ENCODE measurements at regions of chr18 and their contacts with region 1.

Region 1: DNA sequence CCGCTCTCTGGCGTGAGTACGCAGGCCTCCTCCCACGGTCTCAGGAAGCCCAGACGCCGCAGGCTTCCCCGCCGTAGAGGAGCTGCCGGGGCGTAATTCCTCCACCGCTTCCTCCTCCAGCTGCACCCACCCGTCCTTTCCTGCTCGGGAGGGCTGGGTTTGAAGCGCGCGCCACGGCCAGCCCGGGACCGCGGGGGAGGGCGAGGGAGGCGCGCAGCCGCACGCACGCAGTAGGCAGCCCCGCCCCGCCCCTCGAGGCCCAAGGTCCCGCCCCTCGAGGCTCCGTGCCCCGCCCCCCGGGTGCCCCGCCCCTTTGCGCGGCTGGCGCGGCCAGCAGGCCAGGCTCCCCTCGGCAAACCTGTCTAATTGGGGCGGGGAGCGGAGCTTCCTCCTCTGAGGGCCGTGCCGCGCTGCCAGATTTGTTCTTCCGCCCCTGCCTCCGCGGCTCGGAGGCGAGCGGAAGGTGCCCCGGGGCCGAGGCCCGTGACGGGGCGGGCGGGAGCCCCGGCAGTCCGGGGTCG is at the start of gene MALT1:
- DNase-seq: peak; percentile 93
- H3K4me3 Mint-ChIP-seq: peak within 1 kb of the TSS; percentile 91
- H3K27ac Mint-ChIP-seq: peak within 1 kb of the TSS; percentile 90
- H3K4me1 Mint-ChIP-seq: peaks cover 66% of the 10 kb centered on the region
- H3K27me3 Mint-ChIP-seq: no peaks in the 10 kb centered on the region
- total RNA-seq, gene MALT1: 32.4 and 34.1 TPM in 2 replicates

Region 2: DNA sequence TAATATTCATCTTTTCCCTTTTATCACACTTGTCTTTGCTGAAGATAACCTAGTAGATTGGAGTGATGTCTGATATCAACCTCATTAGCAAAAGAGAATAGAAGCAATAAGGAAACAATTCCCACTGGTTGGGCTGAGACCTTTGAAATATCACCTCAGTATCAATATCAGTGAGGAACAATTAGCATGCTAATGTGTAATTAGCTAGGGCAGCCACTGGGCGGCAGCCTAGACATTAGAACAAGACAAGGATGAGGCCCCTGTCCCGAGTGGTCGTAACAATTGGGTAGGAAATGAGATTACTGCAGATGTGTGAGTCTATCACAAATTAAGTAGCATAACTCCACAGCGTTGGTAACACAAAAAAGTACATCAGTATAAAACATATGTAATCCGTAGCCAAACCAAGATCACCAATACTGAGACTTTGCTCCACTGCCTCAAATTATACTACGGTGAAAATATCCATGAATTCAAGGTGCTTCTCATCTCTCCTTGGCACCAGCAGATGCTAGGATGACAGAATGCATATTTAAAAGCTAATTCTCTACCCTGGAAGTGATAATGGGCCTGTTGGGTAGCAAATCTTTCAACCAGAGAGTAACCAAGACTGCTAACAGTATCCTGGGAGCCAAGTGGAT is 141.3 kb before region 1 on chr18:
- intact Hi-C with region 1: loop called (anchors 5 kb)
- DNase-seq: peak; percentile 43
- H3K4me3 Mint-ChIP-seq: no peak overlapping the region
- H3K27ac Mint-ChIP-seq: no peak overlapping the region
- H3K4me1 Mint-ChIP-seq: peaks cover 26% of the 10 kb centered on the region
- H3K27me3 Mint-ChIP-seq: peaks cover 10% of the 10 kb centered on the region

Region 3: GRCh38 chr18:58639751-58640427 is 31.3 kb before region 1 on chr18:
- intact Hi-C with region 1: loop called (anchors 2 kb)
- DNase-seq: no peak
- H3K4me3 Mint-ChIP-seq: no peak overlapping the region
- H3K27ac Mint-ChIP-seq: no peak overlapping the region
- H3K4me1 Mint-ChIP-seq: peaks cover 33% of the 10 kb centered on the region
- H3K27me3 Mint-ChIP-seq: no peaks in the 10 kb centered on the region

Region 4: DNA sequence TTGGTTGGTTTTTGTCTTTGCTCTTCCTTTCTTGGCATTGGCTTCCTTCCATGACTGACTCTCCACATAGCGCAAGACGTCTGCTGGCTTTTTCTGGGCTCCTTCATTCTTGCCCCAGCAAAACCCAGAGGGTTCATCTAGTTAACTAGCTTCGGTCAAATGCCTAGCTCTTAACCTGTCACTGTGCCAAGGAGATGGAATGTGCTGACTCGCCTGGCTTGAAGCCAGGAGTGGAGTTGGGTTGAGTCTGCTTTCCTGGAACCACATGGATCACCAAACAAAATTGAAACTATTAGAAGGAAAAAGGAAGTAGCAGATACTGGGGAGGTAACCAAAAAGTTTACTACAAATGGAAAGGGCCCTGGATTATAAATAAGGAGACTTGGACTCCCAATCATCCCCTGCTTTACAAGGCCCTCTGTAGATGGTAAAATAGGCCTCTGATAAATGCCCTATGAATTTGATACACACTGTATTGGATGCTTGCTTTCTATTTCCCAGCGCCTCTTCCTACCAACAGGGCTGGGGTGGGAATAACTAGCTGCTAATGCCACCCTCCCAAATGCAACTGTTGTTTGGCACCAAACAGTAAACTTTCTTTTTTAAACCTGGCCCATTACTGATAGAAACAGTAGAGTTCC is 11.4 kb after region 1 on chr18:
- intact Hi-C with region 1: loop called (anchors 1 kb)
- DNase-seq: no peak
- H3K4me3 Mint-ChIP-seq: no peak overlapping the region
- H3K27ac Mint-ChIP-seq: no peak overlapping the region
- H3K4me1 Mint-ChIP-seq: peaks cover 44% of the 10 kb centered on the region
- H3K27me3 Mint-ChIP-seq: no peaks in the 10 kb centered on the region

Region 5: DNA sequence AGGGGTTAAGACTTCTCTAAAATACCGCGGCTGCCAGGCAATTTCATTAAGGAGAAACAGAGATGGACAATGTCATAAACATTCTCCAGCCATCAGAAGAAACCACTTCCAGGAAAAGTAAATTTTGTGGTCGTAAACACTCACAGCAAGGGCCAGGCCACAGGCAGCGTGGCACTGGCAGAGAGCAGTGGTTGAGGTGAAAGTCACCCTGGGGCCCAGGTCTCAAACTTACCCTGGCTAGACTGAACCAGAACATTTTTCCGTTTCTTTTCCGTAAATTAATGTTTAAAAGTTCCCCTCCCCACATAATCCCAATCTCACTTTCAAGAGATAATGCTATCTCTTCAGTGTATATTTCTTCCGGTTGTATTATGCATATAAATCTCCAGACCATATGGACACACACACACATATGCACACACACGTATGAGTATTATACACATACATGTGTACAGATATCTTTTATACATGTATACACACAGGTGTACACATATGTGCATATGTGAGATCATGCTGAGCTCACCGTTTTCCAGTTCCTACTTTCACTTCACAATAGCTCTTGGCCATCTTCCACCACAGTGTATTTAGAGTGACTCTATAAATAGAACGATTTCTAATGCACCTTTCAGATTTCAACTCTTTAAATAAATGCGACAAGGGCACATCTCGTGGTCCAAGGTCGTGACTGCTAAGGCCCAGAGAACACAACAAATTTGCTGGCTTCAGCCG is 90.2 kb after region 1 on chr18:
- intact Hi-C with region 1: loop called (anchors 5 kb)
- DNase-seq: no peak
- H3K4me3 Mint-ChIP-seq: no peak overlapping the region
- H3K27ac Mint-ChIP-seq: no peak overlapping the region
- H3K4me1 Mint-ChIP-seq: peaks cover 11% of the 10 kb centered on the region
- H3K27me3 Mint-ChIP-seq: peaks cover 16% of the 10 kb centered on the region

Region 6: DNA sequence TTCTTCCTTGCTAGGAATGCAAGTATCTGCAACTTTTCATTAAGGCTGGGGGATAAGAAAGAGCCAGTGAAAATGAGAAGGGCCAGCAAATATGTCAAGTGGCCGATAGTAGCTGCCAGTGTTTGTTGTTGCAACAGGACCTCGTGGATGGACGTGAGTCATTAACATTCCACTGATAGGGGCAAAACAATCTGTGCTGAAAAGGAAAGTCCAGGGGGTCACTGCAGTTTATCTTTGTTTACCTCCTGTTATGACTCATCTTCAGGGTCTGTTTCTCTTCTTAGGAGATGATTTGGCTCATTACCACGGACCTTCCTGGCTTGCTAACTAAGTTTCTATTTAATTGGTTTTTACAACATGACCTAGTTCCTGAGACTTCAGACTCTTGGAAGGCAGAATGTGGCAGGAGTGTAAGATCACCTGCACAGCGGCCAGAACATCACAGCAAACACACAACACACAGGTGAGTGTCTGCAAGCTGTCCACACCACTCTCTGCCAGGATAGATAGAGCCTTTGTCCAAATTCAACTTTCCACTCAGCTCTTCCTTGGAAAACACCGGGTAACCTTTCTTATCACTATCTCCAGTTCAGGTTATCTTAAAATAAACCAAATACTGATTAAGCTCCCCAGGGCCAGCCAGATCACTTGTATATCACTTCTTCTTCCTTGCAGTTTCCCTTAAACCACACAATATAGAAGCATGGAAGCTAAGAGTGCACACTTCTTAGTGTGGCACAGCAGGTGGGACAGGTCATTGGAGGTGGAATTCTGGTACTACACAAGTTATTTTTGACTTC is 845.4 kb after region 1 on chr18:
- intact Hi-C with region 1: no loop called
- DNase-seq: no peak
- H3K4me3 Mint-ChIP-seq: no peak overlapping the region
- H3K27ac Mint-ChIP-seq: no peak overlapping the region
- H3K4me1 Mint-ChIP-seq: no peaks in the 10 kb centered on the region
- H3K27me3 Mint-ChIP-seq: peaks cover 2% of the 10 kb centered on the region